ENCODE measurements at regions of chr7 and their contacts with region 1.

Region 1: GRCh38 chr7:103637094-103637493 is 191.1 kb upstream of the SLC26A5 start:
- ATAC-seq: peak in 2 of 8 experiments; percentile 39 to 82
- H3K4me3 ChIP-seq: no peak overlapping the region
- H3K27ac ChIP-seq: no peak overlapping the region
- H3K4me1 ChIP-seq: no peaks in the 10 kb centered on the region

Region 2: GRCh38 chr7:103851357-103851756 is 214.3 kb after region 1 on chr7:
- in situ Hi-C with region 1: loop called in 1 of 9 experiments (anchors 25 kb)
- ATAC-seq: no peak
- H3K4me3 ChIP-seq: no peak overlapping the region
- H3K27ac ChIP-seq: no peak overlapping the region
- H3K4me1 ChIP-seq: no peaks in the 10 kb centered on the region